ENCODE measurements at regions of chr16 and their contacts with region 1.

Region 1: DNA sequence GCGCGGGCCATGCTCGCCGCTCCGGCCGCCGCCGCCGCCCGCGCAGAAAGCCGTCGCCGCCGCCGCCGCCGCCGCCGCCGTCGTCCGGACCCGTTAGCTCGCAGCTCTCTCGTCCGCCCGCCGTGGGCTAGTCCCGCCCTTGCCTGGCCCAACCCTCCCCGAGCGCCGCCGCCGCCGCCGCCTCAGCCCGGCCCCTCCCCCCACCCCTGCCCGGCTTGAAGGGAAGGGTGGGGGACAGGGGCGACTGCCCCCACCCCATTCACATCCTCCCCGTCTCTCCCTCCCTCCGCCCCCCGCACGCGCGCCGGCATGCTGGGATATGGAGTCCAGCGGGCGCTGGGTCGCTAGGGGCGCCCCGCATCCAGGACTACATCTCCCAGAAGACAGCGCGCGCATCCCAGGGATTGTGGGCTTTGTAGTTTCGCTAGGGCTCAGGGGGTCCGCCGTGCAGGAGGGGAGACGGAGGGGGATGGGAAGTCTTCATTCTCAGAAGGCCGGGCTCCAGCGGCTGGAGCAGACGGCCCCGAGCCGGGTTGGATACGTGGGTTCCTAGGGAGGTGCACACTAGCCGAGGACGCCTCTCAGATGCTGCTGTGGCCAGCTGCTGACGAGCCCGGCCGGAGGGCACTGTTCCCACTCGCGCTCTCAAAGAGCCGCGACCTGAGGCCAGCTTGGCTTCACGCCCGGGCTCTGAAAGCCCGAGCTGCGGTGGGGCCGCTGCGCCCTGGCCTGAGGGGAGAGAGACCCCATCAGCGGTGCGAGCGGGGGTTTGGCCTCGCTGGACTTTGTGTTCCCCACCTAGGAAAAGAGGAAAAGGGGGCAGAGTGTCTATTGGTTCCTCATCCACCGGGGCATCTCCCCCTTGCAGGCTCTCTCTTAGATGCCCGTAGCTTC is at the start of gene ST3GAL2:
- DNase-seq: peak; percentile 84 to 94 (median 90)
- ATAC-seq: peak; percentile 99
- H3K4me3 ChIP-seq: peak within 1 kb of the TSS; percentile 82
- H3K4me3 Mint-ChIP-seq: peak within 1 kb of the TSS; percentile 92 to 99 (median 98)
- H3K27ac ChIP-seq: peak within 1 kb of the TSS; percentile 58
- H3K27ac Mint-ChIP-seq: peak within 1 kb of the TSS; percentile 84 to 97 (median 93)
- H3K4me1 ChIP-seq: peaks cover 11 to 23% of the 10 kb centered on the region in 2 donors
- H3K4me1 Mint-ChIP-seq: peaks cover 18 to 46% (median 37%) of the 10 kb centered on the region in 7 donors
- H3K27me3 ChIP-seq: no peaks in the 10 kb centered on the region
- H3K27me3 Mint-ChIP-seq: no peaks in the 10 kb centered on the region
- total RNA-seq, gene ST3GAL2: 16.6 to 35.9 (median 30.4) TPM

Region 2: GRCh38 chr16:70402916-70403659 is 36.1 kb before region 1 on chr16:
- CTCF ChIA-PET with region 1: no interaction called
- POLR2A ChIA-PET with region 1: interaction called, 4 read pairs
- intact Hi-C with region 1: loop called (anchors 2 to 5 kb)
- DNase-seq: no peak
- ATAC-seq: no peak
- H3K4me3 ChIP-seq: no peak overlapping the region
- H3K4me3 Mint-ChIP-seq: peak overlapping the region; percentile 6 to 92 (median 30)
- H3K27ac ChIP-seq: no peak overlapping the region
- H3K27ac Mint-ChIP-seq: peak overlapping the region in 6 of 9 donors; percentile 14 to 90 (median 50)
- H3K4me1 ChIP-seq: peaks cover 13 to 26% of the 10 kb centered on the region in 2 donors
- H3K4me1 Mint-ChIP-seq: peaks cover 38 to 69% (median 47%) of the 10 kb centered on the region in 7 donors
- H3K27me3 ChIP-seq: no peaks in the 10 kb centered on the region
- H3K27me3 Mint-ChIP-seq: no peaks in the 10 kb centered on the region

Measured in naive thymus-derived CD4-positive, alpha-beta T cell (primary cell).